ENCODE measurements at regions of chr19 and their contacts with region 1.

Region 1: DNA sequence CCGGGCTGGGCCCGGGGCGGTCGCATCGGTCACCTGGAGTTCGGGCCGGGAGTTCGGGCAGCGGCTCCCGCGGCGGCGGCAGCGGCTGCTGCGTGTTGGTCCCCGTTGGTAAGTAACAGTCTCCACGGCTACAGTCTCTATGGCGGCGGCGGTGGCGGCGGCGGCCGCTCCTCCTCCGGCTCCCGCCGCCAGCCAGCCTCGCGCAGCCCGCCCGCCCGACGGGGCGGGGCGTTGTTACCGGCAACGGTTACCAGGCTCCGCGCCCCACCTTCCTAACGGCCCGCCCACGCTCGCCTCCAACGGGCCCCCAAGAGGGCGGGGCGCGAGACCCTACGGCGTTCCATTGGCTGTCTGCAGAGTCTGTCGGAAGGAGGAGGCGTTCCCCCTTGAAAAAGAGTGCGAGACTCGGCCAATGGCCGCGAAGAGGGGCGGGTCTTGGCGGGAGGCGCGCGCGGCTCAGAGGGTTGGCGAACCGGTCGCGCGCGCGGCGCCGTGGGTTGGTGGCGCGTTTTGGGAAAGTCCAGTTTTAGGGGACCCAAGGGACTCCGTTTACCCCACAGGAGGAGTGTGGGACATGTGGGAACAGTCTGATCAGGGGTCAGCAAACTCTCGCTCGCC is at the start of gene RFX2:
- DNase-seq: peak; percentile 97 to 99 (median 98)
- ATAC-seq: peak; percentile 98
- H3K4me3 ChIP-seq: peak within 1 kb of the TSS; percentile 46
- H3K27ac ChIP-seq: peak within 1 kb of the TSS; percentile 83
- H3K4me1 ChIP-seq: peaks cover 9 to 18% of the 10 kb centered on the region in 2 experiments; a peak in 4 of 5 replicates
- H3K27me3 ChIP-seq: no peaks in the 10 kb centered on the region
- CTCF ChIP-seq: no peak
- EP300 ChIP-seq: no peak
- POLR2A ChIP-seq: peak; percentile 89
- RAD21 ChIP-seq: no peak
- polyA plus RNA-seq, gene RFX2: 3.6 to 4.4 TPM

Region 2: GRCh38 chr19:6065685-6066374 is 44.6 kb before region 1 on chr19:
- CTCF ChIA-PET with region 1: interaction called, 4 read pairs
- POLR2A ChIA-PET with region 1: interaction called, 3 read pairs
- in situ Hi-C with region 1: no loop called
- intact Hi-C with region 1: loop called (anchors 2 kb)
- DNase-seq: peak; percentile 83 to 88 (median 87)
- ATAC-seq: peak; percentile 72
- H3K4me3 ChIP-seq: peak overlapping the region; percentile 14; the same call in 1 of the 2 replicates
- H3K27ac ChIP-seq: peak overlapping the region; percentile 82
- H3K4me1 ChIP-seq: peaks cover 47 to 60% of the 10 kb centered on the region in 2 experiments
- H3K27me3 ChIP-seq: no peaks in the 10 kb centered on the region
- CTCF ChIP-seq: no peak
- EP300 ChIP-seq: peak; percentile 71; the same call in 1 of the 2 replicates
- POLR2A ChIP-seq: peak; percentile 39; the same call in 1 of the 2 replicates
- RAD21 ChIP-seq: no peak

Region 3: DNA sequence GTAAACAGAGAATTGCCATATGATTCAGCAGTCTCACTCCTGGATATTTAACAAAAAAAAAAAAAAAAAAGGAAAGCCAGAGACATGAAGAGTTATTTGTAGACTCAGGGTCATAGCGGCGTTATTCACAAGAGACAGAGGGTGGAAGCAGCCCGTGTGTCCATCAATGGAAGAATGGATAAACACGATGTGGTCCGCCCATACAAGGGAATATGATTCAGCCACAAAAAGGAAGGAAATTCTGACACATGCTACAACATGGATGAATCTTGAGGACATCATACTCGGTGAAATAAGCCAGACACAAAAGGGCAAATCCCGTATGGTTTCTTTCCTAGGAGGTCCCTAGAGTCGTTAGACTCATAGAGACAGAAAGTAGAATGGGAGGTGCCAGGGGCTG is 39.8 kb after region 1 on chr19:
- CTCF ChIA-PET with region 1: no interaction called
- POLR2A ChIA-PET with region 1: no interaction called
- in situ Hi-C with region 1: no loop called
- intact Hi-C with region 1: no loop called
- DNase-seq: no peak
- ATAC-seq: no peak
- H3K4me3 ChIP-seq: no peak overlapping the region
- H3K27ac ChIP-seq: no peak overlapping the region
- H3K4me1 ChIP-seq: no peaks in the 10 kb centered on the region
- H3K27me3 ChIP-seq: peaks cover 3 to 10% of the 10 kb centered on the region in 2 experiments; a peak in 4 of 5 replicates
- CTCF ChIP-seq: no peak
- EP300 ChIP-seq: no peak
- POLR2A ChIP-seq: no peak
- RAD21 ChIP-seq: no peak

Measured in K562 (cell line).